ENCODE measurements at regions of chr11 and their contacts with region 1.

Region 1: GRCh38 chr11:12029738-12030363 is 21.4 kb upstream of the DKK3 start:
- DNase-seq: no peak
- ATAC-seq: peak in 1 of 2 donors; percentile 31

Region 2: GRCh38 chr11:11977206-11977938 is 52.5 kb before region 1 on chr11:
- intact Hi-C with region 1: loop called in 1 of 2 experiments (anchors 10 kb)
- DNase-seq: peak; percentile 83
- ATAC-seq: peak; percentile 21 to 55